Posterior cingulate gyrus (tissue), 11 donors: ENCODE measurements at regions of chr3 and their contacts with region 1.

Region 1: GRCh38 chr3:47333907-47334306 is 46.9 kb upstream of the PTPN23 start:
- DNase-seq: no peak

Region 2: DNA sequence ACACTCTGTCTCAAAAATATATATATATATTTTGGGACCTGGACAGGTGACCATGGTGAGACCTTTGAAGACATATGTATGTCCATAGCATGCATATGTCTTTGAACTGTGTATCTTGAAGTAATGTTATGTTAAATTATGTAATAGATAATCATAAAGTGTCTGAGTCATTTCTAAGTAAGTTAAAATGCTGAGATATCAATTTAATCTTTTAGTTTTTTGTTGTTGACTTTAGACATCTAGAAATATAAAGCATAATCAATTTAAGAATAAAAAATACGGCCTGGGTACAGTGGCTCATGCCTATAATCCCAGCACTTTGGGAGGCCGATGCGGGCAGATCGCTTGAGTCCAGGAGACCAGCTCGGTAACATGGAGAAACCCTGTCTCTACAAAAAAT is 157.3 kb before region 1 on chr3:
- intact Hi-C with region 1: loop called (anchors 5 kb)
- DNase-seq: no peak

Region 3: DNA sequence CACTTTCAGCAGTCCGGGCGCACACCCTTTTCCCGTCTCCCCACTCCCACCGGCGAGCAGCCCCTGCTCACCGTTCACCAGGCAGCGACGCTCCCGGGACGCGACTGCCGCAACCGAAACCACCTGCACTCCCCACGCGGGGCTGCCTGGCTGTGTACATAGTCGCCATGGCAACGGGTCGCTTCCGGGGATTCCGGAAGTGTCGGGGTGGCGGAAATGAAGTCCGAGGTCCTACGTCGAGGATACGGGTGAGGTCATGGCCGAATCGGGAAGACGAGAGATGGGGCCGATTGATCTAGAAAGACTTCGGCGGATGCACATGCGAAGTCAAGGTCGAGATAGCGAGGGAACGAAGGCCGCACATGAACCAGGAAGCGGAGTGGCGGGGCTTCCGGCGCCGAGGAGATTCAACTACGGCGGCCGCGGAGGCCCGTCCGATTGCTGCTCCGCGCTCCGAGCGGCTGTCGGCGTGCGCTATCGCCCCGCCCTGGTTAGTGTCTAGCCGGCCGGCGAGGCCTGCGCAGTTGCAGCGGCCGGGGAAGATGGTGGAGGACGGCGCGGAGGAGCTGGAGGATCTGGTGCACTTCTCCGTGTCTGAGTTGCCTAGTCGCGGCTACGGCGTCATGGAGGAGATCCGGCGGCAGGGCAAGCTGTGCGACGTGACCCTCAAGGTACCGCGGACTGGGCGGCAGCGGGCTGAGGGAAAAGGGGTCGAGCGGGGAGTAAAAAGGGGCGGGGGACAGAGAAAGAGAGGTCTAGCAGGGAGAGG is 51.3 kb before region 1 on chr3 and contains the starts of genes KIF9 and KLHL18:
- intact Hi-C with region 1: no loop called
- DNase-seq: peak; percentile 88 to 98 (median 93)

Region 4: DNA sequence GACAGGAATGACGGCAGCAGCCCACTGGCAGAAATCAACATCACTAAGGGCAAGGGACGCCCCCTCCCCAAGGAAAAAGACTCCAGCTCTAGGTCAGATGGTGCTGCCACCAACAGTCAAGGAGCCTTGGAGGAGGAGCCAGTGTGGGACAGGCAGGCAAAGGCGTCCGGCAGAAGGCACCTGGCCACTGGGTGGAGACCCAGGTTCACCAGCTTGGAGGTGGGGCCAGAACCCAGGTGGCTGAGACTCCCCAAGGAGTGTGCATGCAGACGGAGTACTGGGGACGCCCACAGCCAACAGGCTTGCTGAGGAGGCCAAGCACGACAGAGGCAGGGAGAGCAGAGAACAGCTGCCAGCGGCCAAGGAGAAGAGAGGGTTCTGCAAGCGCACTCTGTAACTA is 82.1 kb after region 1 on chr3:
- intact Hi-C with region 1: no loop called
- DNase-seq: peak in 4 of 10 donors; percentile 57 to 87 (median 85)